Activated CD8-positive, alpha-beta T cell treated with anti-CD3 and anti-CD28 coated beads for 36 hours (primary cell): ENCODE measurements at regions of chr10 and their contacts with region 1.

Region 1: DNA sequence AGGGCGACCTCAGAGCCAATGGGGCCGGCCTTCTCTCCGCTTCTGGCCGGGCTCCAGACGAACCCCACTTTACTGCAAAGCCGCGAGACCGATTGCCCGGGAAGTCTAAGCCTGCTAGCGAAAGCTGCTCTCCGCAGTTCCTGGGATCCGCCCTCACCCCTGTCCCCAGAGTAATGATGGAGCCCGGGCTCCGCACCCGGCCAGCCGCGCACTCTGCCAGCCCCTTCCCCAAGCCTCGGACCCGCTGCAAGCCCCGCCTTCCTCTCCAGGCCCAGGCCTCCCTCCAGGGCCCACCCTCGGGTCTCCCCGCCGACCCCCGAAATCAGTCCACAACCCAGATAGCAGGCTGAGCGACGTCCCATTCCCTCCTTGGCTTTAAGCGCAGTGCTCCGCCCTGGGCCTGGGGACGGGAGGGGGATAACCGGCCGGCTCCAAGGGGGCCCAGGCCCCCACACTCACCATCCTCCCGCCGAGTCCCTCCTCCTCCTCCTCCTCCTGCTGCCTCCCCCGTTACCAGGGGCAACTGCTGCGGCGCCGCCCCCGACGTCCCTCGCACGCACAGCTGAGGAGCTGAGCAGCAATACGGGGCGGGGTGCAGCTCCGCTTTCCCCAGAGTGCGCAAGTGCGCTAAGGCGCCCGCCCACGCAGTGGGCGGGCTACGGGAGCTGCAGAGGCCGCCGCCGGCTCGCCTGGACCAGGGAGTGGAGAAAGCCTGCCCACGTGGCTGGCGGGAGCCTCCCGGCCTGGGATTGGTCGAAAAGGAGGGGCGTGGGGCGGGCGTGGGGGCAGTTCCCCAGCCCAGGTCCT is at the start of gene ARL3:
- DNase-seq: peak; percentile 99
- ATAC-seq: peak; percentile 90
- H3K4me3 Mint-ChIP-seq: peak within 1 kb of the TSS; percentile 82
- H3K27ac Mint-ChIP-seq: peak within 1 kb of the TSS; percentile 93
- H3K4me1 Mint-ChIP-seq: peaks cover 56% of the 10 kb centered on the region
- H3K27me3 Mint-ChIP-seq: no peaks in the 10 kb centered on the region
- CTCF ChIP-seq: peak; percentile 43
- total RNA-seq, gene ARL3: 5.3 to 6.2 TPM

Region 2: DNA sequence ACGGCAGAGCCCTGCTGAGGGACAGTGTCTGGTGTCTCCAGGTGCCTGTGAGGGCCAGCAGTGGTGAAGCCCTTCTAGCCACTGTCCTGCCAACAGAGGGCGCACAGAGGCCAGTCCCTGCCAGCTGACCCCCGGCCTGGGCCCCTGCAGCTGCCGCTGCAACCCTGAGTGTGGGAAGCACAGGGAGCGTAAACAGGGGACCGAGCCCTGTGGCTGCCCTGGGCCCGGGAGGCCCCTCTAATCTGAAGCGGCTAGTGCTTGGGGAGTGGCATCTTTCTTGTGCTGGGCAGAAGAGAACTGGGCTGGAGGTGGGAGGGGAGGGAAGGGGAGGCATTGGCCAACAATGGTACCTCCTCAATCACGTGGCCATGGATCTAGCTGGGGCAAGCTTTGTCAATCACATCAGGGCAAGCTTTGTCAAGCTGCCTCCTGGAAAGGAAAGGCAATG is 35.2 kb before region 1 on chr10:
- CTCF ChIA-PET with region 1: interaction called, 20 read pairs
- POLR2A ChIA-PET with region 1: interaction called, 25 read pairs
- intact Hi-C with region 1: loop called (anchors 5 kb)
- DNase-seq: peak; percentile 42
- ATAC-seq: no peak
- H3K4me3 Mint-ChIP-seq: no peak overlapping the region
- H3K27ac Mint-ChIP-seq: no peak overlapping the region
- H3K4me1 Mint-ChIP-seq: peaks cover 48% of the 10 kb centered on the region
- H3K27me3 Mint-ChIP-seq: no peaks in the 10 kb centered on the region
- CTCF ChIP-seq: peak; percentile 25

Region 3: DNA sequence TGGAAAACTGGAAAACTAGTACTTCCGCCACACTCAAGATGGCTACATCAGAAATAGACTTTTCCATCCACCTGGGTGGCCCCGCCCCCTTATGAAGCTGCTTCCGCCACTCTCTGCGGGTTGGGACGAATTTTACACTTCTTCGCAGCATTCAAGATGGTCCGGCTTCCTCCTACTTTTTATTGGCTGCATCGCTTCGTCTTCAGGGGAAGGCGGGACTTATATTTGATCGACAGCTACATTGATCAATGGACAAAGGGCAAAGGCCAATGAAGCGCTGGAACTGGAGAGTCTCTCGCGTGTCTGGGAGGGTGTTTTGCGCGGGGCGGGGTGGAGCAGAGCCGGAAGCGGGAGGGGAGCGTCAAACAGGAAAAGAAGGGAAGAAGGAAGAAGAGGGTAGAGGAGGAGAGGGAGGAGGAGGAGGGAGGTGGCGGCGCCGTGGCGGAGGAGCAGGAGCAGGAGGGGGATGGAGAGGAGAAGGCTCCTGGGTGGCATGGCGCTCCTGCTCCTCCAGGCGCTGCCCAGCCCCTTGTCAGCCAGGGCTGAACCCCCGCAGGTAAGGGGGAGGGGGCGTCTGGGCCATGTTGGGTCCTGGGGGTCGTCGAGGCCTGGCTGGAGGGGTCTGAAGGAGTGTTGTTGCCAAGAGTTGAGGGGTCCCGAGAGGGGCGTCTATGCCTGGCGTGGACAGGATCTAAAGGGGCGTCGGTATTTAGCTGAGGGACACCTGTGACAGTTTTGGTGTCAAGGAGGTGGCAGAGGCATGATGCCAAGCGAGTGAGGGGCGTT is 29.8 kb after region 1 on chr10 and contains the start of gene WBP1L:
- CTCF ChIA-PET with region 1: interaction called, 5 read pairs
- POLR2A ChIA-PET with region 1: interaction called, 27 read pairs
- intact Hi-C with region 1: no loop called
- DNase-seq: peak; percentile 98
- ATAC-seq: peak; percentile 98
- H3K4me3 Mint-ChIP-seq: peak within 1 kb of the TSS; percentile 95
- H3K27ac Mint-ChIP-seq: peak within 1 kb of the TSS; percentile 94
- H3K4me1 Mint-ChIP-seq: peaks cover 36% of the 10 kb centered on the region
- H3K27me3 Mint-ChIP-seq: no peaks in the 10 kb centered on the region
- CTCF ChIP-seq: no peak
- total RNA-seq, gene WBP1L: 11.4 to 12.7 TPM

Region 4: GRCh38 chr10:102812231-102812876 is 98.3 kb after region 1 on chr10:
- CTCF ChIA-PET with region 1: no interaction called
- POLR2A ChIA-PET with region 1: no interaction called
- intact Hi-C with region 1: no loop called
- DNase-seq: no peak
- ATAC-seq: peak; percentile 53
- H3K4me3 Mint-ChIP-seq: no peak overlapping the region
- H3K27ac Mint-ChIP-seq: peak overlapping the region; percentile 73
- H3K4me1 Mint-ChIP-seq: peaks cover 18% of the 10 kb centered on the region
- H3K27me3 Mint-ChIP-seq: no peaks in the 10 kb centered on the region
- CTCF ChIP-seq: no peak

Region 5: GRCh38 chr10:102951316-102951715 is 237.3 kb after region 1 on chr10:
- CTCF ChIA-PET with region 1: no interaction called
- POLR2A ChIA-PET with region 1: no interaction called
- intact Hi-C with region 1: no loop called
- DNase-seq: no peak
- ATAC-seq: no peak
- H3K4me3 Mint-ChIP-seq: no peak overlapping the region
- H3K27ac Mint-ChIP-seq: no peak overlapping the region
- H3K4me1 Mint-ChIP-seq: no peaks in the 10 kb centered on the region
- H3K27me3 Mint-ChIP-seq: no peaks in the 10 kb centered on the region
- CTCF ChIP-seq: no peak